ENCODE measurements at regions of chr2 and their contacts with region 1.

Region 1: GRCh38 chr2:237998530-237998929 is 31.7 kb downstream of the UBE2F start:
- DNase-seq: peak; percentile 33
- H3K4me3 Mint-ChIP-seq: peak overlapping the region; percentile 68
- H3K27ac Mint-ChIP-seq: peak overlapping the region; percentile 97
- H3K4me1 Mint-ChIP-seq: peaks cover 54% of the 10 kb centered on the region
- H3K27me3 Mint-ChIP-seq: no peaks in the 10 kb centered on the region

Region 2: GRCh38 chr2:237427769-237428506 is 570.6 kb before region 1 on chr2:
- intact Hi-C with region 1: loop called (anchors 2 kb)
- DNase-seq: peak; percentile 49
- H3K4me3 Mint-ChIP-seq: peak overlapping the region; percentile 67
- H3K27ac Mint-ChIP-seq: peak overlapping the region; percentile 93
- H3K4me1 Mint-ChIP-seq: peaks cover 76% of the 10 kb centered on the region
- H3K27me3 Mint-ChIP-seq: peaks cover under 1% of the 10 kb centered on the region

Region 3: DNA sequence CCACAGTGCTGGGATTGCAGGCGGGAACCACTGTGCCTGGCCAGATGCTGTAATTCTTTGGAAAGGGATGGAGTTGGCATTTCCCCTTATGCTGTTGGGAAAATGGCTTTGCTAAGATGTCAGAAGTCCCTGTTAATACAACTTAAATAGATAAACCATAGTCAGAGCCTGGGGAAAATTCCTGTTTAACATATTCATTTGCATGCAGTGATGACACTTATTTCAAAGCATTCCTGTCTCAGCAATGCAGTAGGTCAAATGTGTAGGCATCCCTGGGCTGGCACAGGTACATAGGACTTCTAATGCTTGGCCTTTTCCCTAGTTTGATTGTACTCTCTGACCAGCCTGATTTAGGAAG is 100.5 kb before region 1 on chr2:
- intact Hi-C with region 1: loop called (anchors 1 kb)
- DNase-seq: no peak
- H3K4me3 Mint-ChIP-seq: peak overlapping the region; percentile 48
- H3K27ac Mint-ChIP-seq: peak overlapping the region; percentile 96
- H3K4me1 Mint-ChIP-seq: peaks cover 65% of the 10 kb centered on the region
- H3K27me3 Mint-ChIP-seq: no peaks in the 10 kb centered on the region

Region 4: DNA sequence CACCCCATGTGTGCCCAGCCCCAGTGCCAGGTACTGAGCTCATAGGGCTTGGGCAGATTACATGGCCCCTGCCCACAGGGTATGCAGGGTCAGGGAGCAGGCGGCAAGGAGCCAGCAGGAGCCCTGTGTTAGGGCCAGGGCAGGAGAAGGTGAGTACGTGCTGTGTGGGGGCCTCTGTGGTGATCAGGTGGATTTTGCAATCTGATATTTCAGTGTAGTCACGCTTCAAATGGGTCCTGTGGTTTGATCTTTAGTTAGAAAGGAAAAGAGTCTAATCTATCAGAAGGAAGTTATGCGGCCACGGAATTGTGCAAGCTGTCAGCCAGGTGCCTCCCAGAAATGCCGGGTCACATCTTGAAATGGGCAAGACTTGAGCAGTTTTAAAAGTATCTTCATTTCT is 17.8 kb before region 1 on chr2:
- intact Hi-C with region 1: loop called (anchors 2 kb)
- DNase-seq: no peak
- H3K4me3 Mint-ChIP-seq: peak overlapping the region; percentile 34
- H3K27ac Mint-ChIP-seq: peak overlapping the region; percentile 63
- H3K4me1 Mint-ChIP-seq: peaks cover 77% of the 10 kb centered on the region
- H3K27me3 Mint-ChIP-seq: no peaks in the 10 kb centered on the region

Region 5: GRCh38 chr2:238024986-238025385 is 26.5 kb after region 1 on chr2:
- intact Hi-C with region 1: loop called (anchors 1 kb)
- DNase-seq: peak; percentile 19
- H3K4me3 Mint-ChIP-seq: peak overlapping the region; percentile 8
- H3K27ac Mint-ChIP-seq: peak overlapping the region; percentile 82
- H3K4me1 Mint-ChIP-seq: peaks cover 34% of the 10 kb centered on the region
- H3K27me3 Mint-ChIP-seq: no peaks in the 10 kb centered on the region

Region 6: GRCh38 chr2:238288650-238289573 is 290.4 kb after region 1 on chr2:
- intact Hi-C with region 1: loop called (anchors 5 kb)
- DNase-seq: peak; percentile 97
- H3K4me3 Mint-ChIP-seq: peak overlapping the region; percentile 91
- H3K27ac Mint-ChIP-seq: peak overlapping the region; percentile 97
- H3K4me1 Mint-ChIP-seq: peaks cover 38% of the 10 kb centered on the region
- H3K27me3 Mint-ChIP-seq: peaks cover 4% of the 10 kb centered on the region

Measured in activated T-helper 1 cell treated with anti-CD3 and anti-CD28 coated beads, Interleukin-12 subunit alpha, Interleukin-12 subunit beta, Interleukin-2, Interleukin-4 antibody, amounts not matched to agents 30 ng/mL and 10 ng/mL and 1 ng/mL, durations not matched to agents 14 hours and 24 hours and 36 hours (primary cell).